K562 (cell line): ENCODE measurements at regions of chr11 and their contacts with region 1.

Region 1: DNA sequence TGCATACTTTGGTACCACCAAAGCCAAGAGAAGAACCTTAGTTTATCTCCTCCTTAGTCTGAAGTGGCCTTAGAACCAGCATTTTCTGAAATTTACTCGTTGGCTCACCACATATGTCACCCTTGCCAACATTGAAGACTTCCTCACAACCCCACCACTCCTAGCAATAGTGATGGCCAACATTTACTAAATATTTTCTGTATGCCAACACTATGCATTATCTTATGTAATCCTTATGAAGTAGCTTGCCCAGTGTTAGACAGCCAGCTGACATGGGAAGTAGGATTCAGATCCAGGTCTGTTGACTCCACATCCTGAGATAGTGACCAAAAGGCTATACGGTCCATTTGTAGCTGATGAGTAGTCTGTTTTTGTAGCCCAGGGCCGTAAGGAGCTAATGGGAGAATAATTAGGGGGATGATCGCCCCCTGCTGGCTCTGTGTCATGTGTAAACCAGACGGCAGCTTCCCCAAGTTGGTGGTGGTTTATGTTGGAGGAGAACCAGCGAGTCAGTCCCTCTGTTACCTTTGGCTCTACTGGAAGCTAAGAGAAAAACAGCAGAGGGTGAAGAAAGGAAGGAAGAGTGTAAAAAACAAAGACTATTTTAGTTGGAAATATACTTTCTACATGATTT is 120.5 kb upstream of the RASSF10 start:
- DNase-seq: peak; percentile 71 to 90 (median 75)
- ATAC-seq: peak; percentile 96
- H3K4me3 ChIP-seq: no peak overlapping the region
- H3K27ac ChIP-seq: no peak overlapping the region
- H3K4me1 ChIP-seq: peaks cover 0 to 5% of the 10 kb centered on the region in 2 experiments; a peak in 4 of 5 replicates
- H3K27me3 ChIP-seq: no peaks in the 10 kb centered on the region
- CTCF ChIP-seq: peak; percentile 82 to 88 (median 86)
- EP300 ChIP-seq: no peak
- POLR2A ChIP-seq: no peak
- RAD21 ChIP-seq: peak; percentile 93 to 95

Region 2: GRCh38 chr11:12122083-12122482 is 766.6 kb before region 1 on chr11:
- CTCF ChIA-PET with region 1: no interaction called
- POLR2A ChIA-PET with region 1: no interaction called
- in situ Hi-C with region 1: no loop called
- intact Hi-C with region 1: no loop called
- DNase-seq: peak in 2 of 4 experiments; percentile 50 to 53
- ATAC-seq: peak; percentile 35
- H3K4me3 ChIP-seq: no peak overlapping the region
- H3K27ac ChIP-seq: no peak overlapping the region
- H3K4me1 ChIP-seq: peaks cover 61 to 77% of the 10 kb centered on the region in 2 experiments
- H3K27me3 ChIP-seq: no peaks in the 10 kb centered on the region
- CTCF ChIP-seq: peak; percentile 48 to 61 (median 58); a peak in 5 of 6 replicates
- EP300 ChIP-seq: no peak
- POLR2A ChIP-seq: no peak
- RAD21 ChIP-seq: peak in 1 of 2 experiments; percentile 65; a peak in 3 of 4 replicates

Region 3: DNA sequence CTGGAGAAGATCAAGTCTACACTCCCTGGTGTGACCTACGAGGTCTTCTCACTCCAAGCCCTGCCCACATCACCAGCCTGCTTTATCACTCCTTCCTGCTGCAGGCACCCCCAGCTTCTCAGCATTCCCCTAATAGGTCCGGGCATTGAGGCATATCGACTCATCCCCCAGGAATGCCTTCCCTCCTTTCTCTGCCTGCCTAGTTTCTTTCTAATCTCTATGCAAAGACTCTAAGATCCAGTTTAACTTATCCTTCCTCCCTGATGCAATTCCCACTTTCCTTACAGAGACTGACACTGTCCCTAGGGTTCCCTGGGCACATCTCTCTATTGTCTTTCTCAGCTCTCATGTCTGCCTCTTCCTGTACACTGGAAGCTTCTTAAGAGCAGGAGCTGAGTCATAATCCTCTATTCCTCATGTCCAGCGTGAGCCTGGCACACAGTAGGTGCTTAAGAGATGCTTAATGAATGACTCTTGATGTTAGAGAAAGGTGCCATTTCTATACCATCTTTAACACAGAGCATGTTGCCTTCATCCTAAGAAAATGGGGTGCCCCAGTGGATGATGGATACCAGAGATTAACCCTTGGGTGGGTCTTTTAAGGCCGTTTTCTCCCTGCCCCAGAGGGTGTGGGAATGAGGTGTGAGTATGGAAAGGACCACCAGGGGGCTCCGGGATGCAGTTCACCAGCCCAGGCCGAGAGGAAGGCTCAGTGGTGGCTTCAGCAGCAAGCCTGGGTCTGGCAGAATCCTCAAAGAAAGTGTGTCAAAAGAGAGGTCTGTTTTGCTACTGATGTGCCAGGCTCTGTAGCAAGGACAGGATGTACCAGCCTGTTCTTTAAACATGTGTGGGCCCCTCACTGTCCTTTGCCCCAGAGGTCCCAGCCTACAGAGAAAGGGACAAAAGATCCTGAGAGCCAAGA is 476.6 kb before region 1 on chr11:
- CTCF ChIA-PET with region 1: interaction called, 8 read pairs
- POLR2A ChIA-PET with region 1: no interaction called
- in situ Hi-C with region 1: loop called (anchors 5 kb)
- intact Hi-C with region 1: loop called (anchors 1 kb)
- DNase-seq: peak; percentile 73 to 77 (median 76)
- ATAC-seq: peak; percentile 99
- H3K4me3 ChIP-seq: no peak overlapping the region
- H3K27ac ChIP-seq: no peak overlapping the region
- H3K4me1 ChIP-seq: 0 out of 5 replicates have a peak, but pooled peaks cover 0 to 3% of the 10 kb centered on the region in 2 experiments
- H3K27me3 ChIP-seq: peaks cover 2 to 16% of the 10 kb centered on the region in 2 experiments
- CTCF ChIP-seq: peak; percentile 77 to 90 (median 84)
- EP300 ChIP-seq: no peak
- POLR2A ChIP-seq: no peak
- RAD21 ChIP-seq: peak; percentile 89 to 95

Region 4: GRCh38 chr11:12599408-12600143 is 289.1 kb before region 1 on chr11:
- CTCF ChIA-PET with region 1: no interaction called
- POLR2A ChIA-PET with region 1: no interaction called
- in situ Hi-C with region 1: loop called (anchors 5 kb)
- intact Hi-C with region 1: loop called (anchors 1 kb)
- DNase-seq: peak; percentile 62 to 80 (median 66)
- ATAC-seq: peak; percentile 93
- H3K4me3 ChIP-seq: no peak overlapping the region
- H3K27ac ChIP-seq: no peak overlapping the region; the same call in 2 of the 3 replicates
- H3K4me1 ChIP-seq: peaks cover 4 to 27% of the 10 kb centered on the region in 2 experiments
- H3K27me3 ChIP-seq: no peaks in the 10 kb centered on the region
- CTCF ChIP-seq: peak; percentile 81 to 93 (median 85)
- EP300 ChIP-seq: no peak
- POLR2A ChIP-seq: no peak
- RAD21 ChIP-seq: peak; percentile 67 to 87

Region 5: GRCh38 chr11:12813371-12814225 is 75.0 kb before region 1 on chr11:
- CTCF ChIA-PET with region 1: no interaction called
- POLR2A ChIA-PET with region 1: interaction called, 3 read pairs
- in situ Hi-C with region 1: no loop called
- intact Hi-C with region 1: loop called (anchors 1 kb)
- DNase-seq: peak; percentile 16 to 54 (median 34)
- ATAC-seq: peak; percentile 15
- H3K4me3 ChIP-seq: no peak overlapping the region
- H3K27ac ChIP-seq: 0 out of 3 replicates have a peak overlapping the region, but pooled peaks have one; percentile 0
- H3K4me1 ChIP-seq: peaks cover 31 to 58% of the 10 kb centered on the region in 2 experiments
- H3K27me3 ChIP-seq: no peaks in the 10 kb centered on the region
- CTCF ChIP-seq: no peak
- EP300 ChIP-seq: no peak
- POLR2A ChIP-seq: no peak
- RAD21 ChIP-seq: 0 out of 4 replicates have a peak, but pooled peaks of 1 of the 2 experiments have one; percentile 1